Breast epithelium (tissue), 4 donors: ENCODE measurements at regions of chr20 and their contacts with region 1.

Region 1: DNA sequence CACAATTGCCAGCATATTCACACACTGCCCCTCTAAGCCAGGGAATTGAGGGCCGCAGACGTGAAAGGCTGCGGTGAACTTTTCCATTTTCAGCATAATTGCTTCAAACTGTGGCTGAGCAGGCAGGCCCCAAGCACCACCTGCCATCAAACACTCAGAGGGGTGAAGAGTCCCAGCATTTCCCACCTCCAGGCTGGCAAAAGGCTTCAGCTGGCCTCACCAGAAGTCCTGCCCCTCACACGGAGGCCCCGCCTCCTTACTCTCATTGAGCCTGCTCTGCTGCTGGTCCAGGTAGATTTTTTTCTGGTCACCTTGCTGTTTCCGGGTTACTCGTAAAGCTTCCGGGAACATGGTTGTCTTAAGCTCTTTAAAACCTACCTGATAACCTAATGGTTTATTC is 52.0 kb upstream of the PRELID3B start:
- DNase-seq: no peak
- H3K4me3 ChIP-seq: no peak overlapping the region
- H3K27ac ChIP-seq: no peak overlapping the region
- H3K4me1 ChIP-seq: no peaks in the 10 kb centered on the region
- H3K27me3 ChIP-seq: no peaks in the 10 kb centered on the region
- CTCF ChIP-seq: no peak
- POLR2A ChIP-seq: no peak

Region 2: DNA sequence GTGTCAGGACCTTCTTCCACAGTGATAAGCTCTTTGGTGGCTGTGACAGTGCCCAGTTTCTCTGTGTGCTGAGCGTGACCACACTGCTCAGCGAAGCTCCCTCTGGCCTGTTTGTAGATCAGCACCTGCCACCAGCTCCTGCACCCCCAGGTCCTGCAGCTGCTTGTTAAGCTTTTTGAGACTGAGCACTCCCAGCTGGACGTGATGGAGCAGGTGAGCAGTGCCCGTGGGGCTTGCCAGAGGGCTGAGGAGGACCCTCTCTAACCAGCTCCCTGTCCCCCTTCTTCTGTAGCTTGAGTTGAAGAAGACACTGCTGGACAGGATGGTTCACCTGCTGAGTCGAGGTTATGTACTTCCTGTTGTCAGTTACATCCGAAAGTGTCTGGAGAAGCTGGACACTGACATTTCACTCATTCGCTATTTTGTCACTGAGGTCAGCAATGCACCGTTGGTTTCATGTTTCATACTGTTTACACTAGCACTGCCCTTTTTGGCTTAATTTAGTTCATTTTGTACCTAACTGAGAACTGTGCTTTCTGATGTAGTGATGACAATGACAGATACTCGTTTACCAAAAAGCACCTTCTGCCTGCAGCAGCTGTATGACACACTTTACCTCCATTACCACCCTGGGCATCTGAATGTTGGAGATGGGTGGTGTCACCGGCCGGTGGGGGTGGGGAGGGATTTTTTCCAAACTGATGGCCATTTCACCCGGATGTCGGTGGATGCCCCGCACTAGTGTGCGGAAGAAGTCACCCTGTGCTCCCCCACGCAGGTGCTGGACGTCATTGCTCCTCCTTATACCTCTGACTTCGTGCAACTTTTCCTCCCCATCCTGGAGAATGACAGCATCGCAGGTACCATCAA is 101.0 kb before region 1 on chr20:
- intact Hi-C with region 1: no loop called
- DNase-seq: no peak
- H3K4me3 ChIP-seq: no peak overlapping the region
- H3K27ac ChIP-seq: no peak overlapping the region
- H3K4me1 ChIP-seq: no peaks in the 10 kb centered on the region
- H3K27me3 ChIP-seq: no peaks in the 10 kb centered on the region
- CTCF ChIP-seq: no peak
- POLR2A ChIP-seq: no peak

Region 3: GRCh38 chr20:59177261-59178250 is 83.0 kb after region 1 on chr20:
- intact Hi-C with region 1: no loop called
- DNase-seq: no peak
- H3K4me3 ChIP-seq: no peak overlapping the region
- H3K27ac ChIP-seq: no peak overlapping the region
- H3K4me1 ChIP-seq: peaks cover 0 to 5% of the 10 kb centered on the region in 2 donors
- H3K27me3 ChIP-seq: no peaks in the 10 kb centered on the region
- CTCF ChIP-seq: no peak
- POLR2A ChIP-seq: no peak

Region 4: DNA sequence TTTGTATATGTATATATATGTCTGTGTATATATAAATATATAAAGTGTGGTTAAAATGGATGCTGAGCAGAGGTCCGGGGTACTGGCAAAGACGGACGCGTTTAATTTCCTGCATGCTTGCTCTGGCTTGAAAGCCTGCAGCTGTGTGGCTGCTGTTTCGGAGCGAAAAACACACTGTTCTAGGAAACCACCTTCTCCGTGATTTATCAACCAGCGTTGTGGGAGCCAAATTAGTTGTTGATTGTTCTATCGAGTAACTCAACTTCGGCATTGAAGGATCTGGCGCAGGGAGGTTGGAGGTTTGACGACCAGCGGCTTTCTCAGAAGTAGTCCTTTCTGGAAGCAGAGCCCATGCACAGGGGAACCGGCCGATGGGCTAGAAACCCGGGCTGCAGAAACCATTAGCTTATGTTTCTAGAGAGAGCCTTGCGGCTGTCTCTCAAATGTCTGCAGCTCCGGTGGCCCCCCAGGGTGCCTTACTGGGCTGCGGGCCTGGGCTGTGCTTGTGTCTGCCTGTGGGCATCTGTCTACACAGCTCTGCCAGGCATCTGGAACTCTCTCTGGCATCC is 287.7 kb after region 1 on chr20:
- intact Hi-C with region 1: loop called (anchors 5 kb)
- DNase-seq: no peak
- H3K4me3 ChIP-seq: no peak overlapping the region
- H3K27ac ChIP-seq: no peak overlapping the region
- H3K4me1 ChIP-seq: no peaks in the 10 kb centered on the region
- H3K27me3 ChIP-seq: no peaks in the 10 kb centered on the region
- CTCF ChIP-seq: no peak
- POLR2A ChIP-seq: no peak